ENCODE measurements at regions of chr5 and their contacts with region 1.

Region 1: DNA sequence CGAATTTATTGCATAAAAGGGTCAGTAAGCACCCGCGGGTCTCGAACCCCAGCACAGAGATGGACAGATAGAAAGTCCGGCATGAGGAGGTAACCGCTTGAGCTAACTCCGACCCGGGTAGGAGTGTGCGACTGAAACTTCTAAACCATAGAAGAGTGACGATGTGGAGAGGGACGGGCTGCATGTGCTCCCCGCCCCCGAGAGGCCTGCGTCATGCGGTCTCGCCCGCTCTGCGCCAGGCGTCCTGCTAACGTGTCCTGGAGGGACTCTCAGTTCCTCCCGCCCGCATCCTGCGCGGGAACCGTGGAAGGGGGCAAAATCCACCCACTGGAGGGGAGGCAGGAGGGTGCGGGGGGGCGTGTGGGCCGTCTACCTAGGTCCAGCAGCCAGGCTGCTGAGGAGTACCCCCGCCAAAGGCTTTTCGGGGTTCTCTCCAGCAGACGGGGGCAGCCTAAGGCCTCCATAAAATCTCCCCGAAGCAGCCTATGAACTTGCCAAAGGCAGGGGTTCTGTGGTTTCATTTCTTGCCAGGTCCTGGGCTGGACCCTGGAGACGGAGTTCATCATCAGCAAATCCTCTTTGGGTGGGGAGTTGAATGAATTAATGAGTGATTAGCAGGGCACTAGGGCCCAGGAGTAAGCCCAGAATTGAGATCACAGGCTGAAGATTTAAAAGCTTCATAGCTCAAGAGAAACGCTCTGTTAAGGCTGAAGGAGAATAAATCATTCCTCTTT is 51.9 kb downstream of the TGFBI start:
- DNase-seq: no peak
- H3K4me3 Mint-ChIP-seq: no peak overlapping the region
- H3K27ac Mint-ChIP-seq: no peak overlapping the region
- H3K4me1 Mint-ChIP-seq: no peaks in the 10 kb centered on the region
- H3K27me3 Mint-ChIP-seq: no peaks in the 10 kb centered on the region
- CTCF ChIP-seq: no peak

Region 2: GRCh38 chr5:135887351-135887864 is 193.2 kb before region 1 on chr5:
- CTCF ChIA-PET with region 1: interaction called, 46 read pairs
- POLR2A ChIA-PET with region 1: interaction called, 5 read pairs
- intact Hi-C with region 1: loop called (anchors 1 kb)
- DNase-seq: peak; percentile 90
- H3K4me3 Mint-ChIP-seq: no peak overlapping the region
- H3K27ac Mint-ChIP-seq: no peak overlapping the region
- H3K4me1 Mint-ChIP-seq: no peaks in the 10 kb centered on the region
- H3K27me3 Mint-ChIP-seq: peaks cover 37% of the 10 kb centered on the region
- CTCF ChIP-seq: peak; percentile 96

Region 3: GRCh38 chr5:136028782-136029742 is 51.6 kb before region 1 on chr5 and contains the start of gene TGFBI:
- CTCF ChIA-PET with region 1: interaction called, 18 read pairs
- POLR2A ChIA-PET with region 1: interaction called, 5 read pairs
- intact Hi-C with region 1: no loop called
- DNase-seq: peak; percentile 87
- H3K4me3 Mint-ChIP-seq: peak within 1 kb of the TSS; percentile 80
- H3K27ac Mint-ChIP-seq: peak within 1 kb of the TSS; percentile 76
- H3K4me1 Mint-ChIP-seq: peaks cover 57% of the 10 kb centered on the region
- H3K27me3 Mint-ChIP-seq: no peaks in the 10 kb centered on the region
- CTCF ChIP-seq: no peak
- total RNA-seq, gene TGFBI: 623 and 892 TPM in 2 replicates

Region 4: GRCh38 chr5:136094189-136094912 is 13.7 kb after region 1 on chr5:
- CTCF ChIA-PET with region 1: interaction called, 31 read pairs
- POLR2A ChIA-PET with region 1: no interaction called
- intact Hi-C with region 1: no loop called
- DNase-seq: no peak
- H3K4me3 Mint-ChIP-seq: no peak overlapping the region
- H3K27ac Mint-ChIP-seq: no peak overlapping the region
- H3K4me1 Mint-ChIP-seq: no peaks in the 10 kb centered on the region
- H3K27me3 Mint-ChIP-seq: no peaks in the 10 kb centered on the region
- CTCF ChIP-seq: no peak

Region 5: GRCh38 chr5:136108180-136108611 is 27.5 kb after region 1 on chr5:
- CTCF ChIA-PET with region 1: interaction called, 20 read pairs
- POLR2A ChIA-PET with region 1: interaction called, 4 read pairs
- intact Hi-C with region 1: no loop called
- DNase-seq: peak; percentile 48
- H3K4me3 Mint-ChIP-seq: no peak overlapping the region
- H3K27ac Mint-ChIP-seq: peak overlapping the region; percentile 80
- H3K4me1 Mint-ChIP-seq: peaks cover 16% of the 10 kb centered on the region
- H3K27me3 Mint-ChIP-seq: no peaks in the 10 kb centered on the region
- CTCF ChIP-seq: no peak

Region 6: GRCh38 chr5:136132557-136133221 is 52.0 kb after region 1 on chr5 and contains the start of gene SMAD5:
- CTCF ChIA-PET with region 1: interaction called, 7 read pairs
- POLR2A ChIA-PET with region 1: interaction called, 21 read pairs
- intact Hi-C with region 1: no loop called
- DNase-seq: peak; percentile 97
- H3K4me3 Mint-ChIP-seq: peak within 1 kb of the TSS; percentile 89
- H3K27ac Mint-ChIP-seq: peak within 1 kb of the TSS; percentile 97
- H3K4me1 Mint-ChIP-seq: peaks cover 22% of the 10 kb centered on the region
- H3K27me3 Mint-ChIP-seq: no peaks in the 10 kb centered on the region
- CTCF ChIP-seq: no peak
- total RNA-seq, gene SMAD5: 97.4 and 106 TPM in 2 replicates

Measured in MCF 10A (cell line).